CD4-positive, alpha-beta memory T cell (primary cell): ENCODE measurements at regions of chr19 and their contacts with region 1.

Region 1: DNA sequence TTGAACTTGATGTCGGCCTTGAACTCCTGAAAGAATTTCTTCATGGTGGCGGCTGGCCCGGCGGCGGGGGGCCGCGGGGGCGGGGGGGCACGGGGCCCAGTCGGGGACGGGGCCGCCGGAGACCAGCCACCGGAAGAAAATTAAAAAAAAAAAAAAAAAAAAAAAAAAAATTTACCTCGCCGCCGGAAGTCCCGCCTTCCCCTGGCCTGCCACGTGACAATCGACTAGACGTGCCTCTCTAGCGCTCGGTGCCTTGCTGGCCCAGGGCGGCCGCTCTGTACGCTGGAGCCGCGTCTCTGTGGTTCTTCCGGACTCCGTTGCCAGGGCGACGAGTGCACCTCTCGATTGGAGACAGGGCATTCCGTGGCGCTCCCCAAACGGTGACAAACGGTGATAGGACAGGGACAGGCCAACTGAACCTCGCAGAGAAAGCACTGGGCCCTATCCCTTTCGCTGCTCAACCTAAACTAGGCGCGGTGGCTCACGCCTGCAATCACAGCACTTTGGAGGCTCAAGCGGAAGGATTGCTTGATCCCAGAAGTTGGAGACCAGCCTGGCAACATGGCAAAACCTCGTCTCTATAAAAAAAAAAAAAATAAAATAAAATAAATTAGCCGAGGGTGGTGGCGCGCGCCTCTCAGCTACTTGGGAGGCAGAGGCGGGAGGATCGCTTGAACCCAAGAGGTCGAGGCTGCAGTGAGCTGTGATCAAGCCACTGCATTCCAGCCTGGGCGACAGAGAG is at the start of gene UBXN6:
- DNase-seq: peak; percentile 97 to 99 (median 98)
- H3K4me3 ChIP-seq: peak within 1 kb of the TSS; percentile 42 to 52
- H3K4me3 Mint-ChIP-seq: peak within 1 kb of the TSS; percentile 89 to 94 (median 91)
- H3K27ac ChIP-seq: peak within 1 kb of the TSS; percentile 62
- H3K27ac Mint-ChIP-seq: peak within 1 kb of the TSS; percentile 90 to 97 (median 96)
- H3K4me1 ChIP-seq: peaks cover 16% of the 10 kb centered on the region
- H3K4me1 Mint-ChIP-seq: peaks cover 11 to 26% (median 17%) of the 10 kb centered on the region in 4 donors
- H3K27me3 ChIP-seq: no peaks in the 10 kb centered on the region
- H3K27me3 Mint-ChIP-seq: peaks cover 0 to 2% of the 10 kb centered on the region in 2 donors
- total RNA-seq, gene UBXN6: 61.3 to 63.5 TPM

Region 2: GRCh38 chr19:4471403-4472173 is 13.8 kb after region 1 on chr19:
- CTCF ChIA-PET with region 1: interaction called, 13 read pairs
- POLR2A ChIA-PET with region 1: interaction called, 50 read pairs
- intact Hi-C with region 1: loop called (anchors 1 kb)
- DNase-seq: peak; percentile 96 to 100 (median 99)
- H3K4me3 ChIP-seq: peak overlapping the region; percentile 27 to 68
- H3K4me3 Mint-ChIP-seq: no peak overlapping the region
- H3K27ac ChIP-seq: peak overlapping the region; percentile 74
- H3K27ac Mint-ChIP-seq: no peak overlapping the region
- H3K4me1 ChIP-seq: peaks cover 30% of the 10 kb centered on the region
- H3K4me1 Mint-ChIP-seq: peaks cover 9 to 26% (median 16%) of the 10 kb centered on the region in 4 donors
- H3K27me3 ChIP-seq: no peaks in the 10 kb centered on the region
- H3K27me3 Mint-ChIP-seq: no peaks in the 10 kb centered on the region